GM10248 (cell line): ENCODE measurements at regions of chr1 and their contacts with region 1.

Region 1: DNA sequence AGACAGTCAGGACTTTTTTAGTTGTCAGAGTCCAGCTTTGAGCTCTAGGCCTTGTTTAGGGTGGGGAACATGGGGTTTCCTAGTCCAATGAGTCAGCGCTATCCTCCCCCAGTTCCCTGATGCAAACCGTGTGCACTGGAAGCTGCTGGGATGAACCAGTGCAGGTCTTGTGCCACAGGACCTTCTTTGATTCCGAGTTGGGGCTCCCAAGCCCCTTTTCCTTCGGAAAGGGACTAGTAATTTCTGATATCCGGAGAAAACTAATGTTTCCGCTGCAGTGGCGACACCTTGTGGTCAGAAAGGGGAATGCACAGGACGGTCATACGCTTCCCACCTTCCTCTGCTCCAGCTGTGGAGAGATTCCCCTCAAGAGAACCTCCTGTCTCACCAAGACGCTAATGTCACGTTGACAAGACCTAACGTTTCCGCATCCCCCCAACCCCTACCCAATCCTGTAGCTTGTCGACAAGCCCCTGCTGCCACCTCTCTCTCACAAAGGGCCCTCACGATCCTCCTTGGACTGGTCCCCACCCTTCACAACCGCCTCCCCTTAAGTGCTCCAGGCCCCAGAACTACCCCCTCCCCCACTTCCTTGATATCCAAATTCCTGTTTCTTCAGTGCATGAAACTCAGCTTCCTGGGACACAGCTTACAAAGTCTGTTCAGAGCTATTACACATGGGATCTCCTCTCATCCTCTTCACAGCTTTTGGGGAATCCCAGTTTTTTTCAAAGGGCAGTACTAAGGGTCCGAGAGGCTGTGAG is 30.9 kb downstream of the GPA33 start:
- DNase-seq: peak; percentile 64
- CTCF ChIP-seq: peak; percentile 91

Region 2: GRCh38 chr1:166875734-166876539 is 183.3 kb before region 1 on chr1 and contains the start of gene TADA1:
- CTCF ChIA-PET with region 1: interaction called, 51 read pairs
- POLR2A ChIA-PET with region 1: no interaction called
- DNase-seq: peak; percentile 96
- CTCF ChIP-seq: peak; percentile 13

Region 3: DNA sequence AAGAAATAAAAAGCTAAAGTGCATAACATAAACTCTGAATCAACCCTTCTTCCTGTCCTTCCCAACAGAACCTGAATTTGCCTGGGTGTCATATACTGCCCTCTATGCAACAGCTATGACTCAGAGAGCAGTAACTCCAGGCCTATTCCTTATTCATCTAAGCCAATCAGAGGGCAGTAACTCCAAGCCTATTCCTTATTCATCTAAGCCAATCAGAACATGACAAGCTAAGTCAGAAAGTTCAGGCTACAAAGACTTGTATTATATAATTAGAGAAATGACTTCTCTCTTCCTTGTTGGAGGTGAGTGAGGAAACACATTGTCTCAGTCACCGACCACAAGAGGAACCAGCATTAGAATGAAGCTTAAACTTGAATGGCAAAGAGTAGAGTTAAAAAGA is 157.0 kb before region 1 on chr1:
- CTCF ChIA-PET with region 1: interaction called, 659 read pairs
- POLR2A ChIA-PET with region 1: no interaction called
- DNase-seq: no peak
- CTCF ChIP-seq: no peak

Region 4: DNA sequence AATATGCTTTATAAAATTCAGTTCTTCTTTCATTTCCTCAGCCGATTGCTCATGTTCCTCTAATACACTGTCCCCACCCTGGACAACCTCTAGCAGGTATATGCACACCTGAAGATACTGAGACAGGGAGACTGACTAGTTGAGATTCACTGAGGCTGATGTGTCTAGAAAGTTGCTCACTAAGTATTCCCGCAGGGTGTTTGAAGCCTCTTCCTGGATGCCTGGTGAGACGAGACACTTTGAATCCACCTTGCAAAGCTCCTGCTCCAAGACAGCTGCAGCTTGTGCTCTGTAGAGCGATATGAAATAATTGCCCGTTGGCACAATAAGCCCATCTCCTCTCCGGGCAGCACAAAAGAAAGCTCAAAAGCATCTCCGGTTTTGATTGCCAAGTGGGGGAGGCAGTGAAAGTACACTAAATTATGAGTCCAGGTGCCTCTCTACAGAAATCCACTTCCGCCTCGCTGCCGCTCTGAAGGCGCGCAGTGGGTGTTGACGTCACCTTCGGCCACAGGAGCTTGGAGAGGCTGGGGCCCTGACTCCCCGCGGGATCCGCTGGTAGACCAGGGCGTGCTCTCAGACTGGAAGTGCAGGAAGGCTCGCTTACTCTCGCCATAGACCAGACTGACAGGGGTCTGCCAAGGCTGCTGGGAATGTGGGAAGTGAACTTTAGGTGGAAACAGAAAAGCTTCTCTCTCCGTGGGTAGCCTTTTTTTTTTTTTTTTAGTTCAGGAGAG is 15.3 kb before region 1 on chr1:
- CTCF ChIA-PET with region 1: interaction called, 56 read pairs
- POLR2A ChIA-PET with region 1: no interaction called
- DNase-seq: peak; percentile 72
- CTCF ChIP-seq: no peak

Region 5: GRCh38 chr1:167137332-167137781 is 78.1 kb after region 1 on chr1:
- CTCF ChIA-PET with region 1: interaction called, 11 read pairs
- POLR2A ChIA-PET with region 1: no interaction called
- DNase-seq: no peak
- CTCF ChIP-seq: no peak

Region 6: DNA sequence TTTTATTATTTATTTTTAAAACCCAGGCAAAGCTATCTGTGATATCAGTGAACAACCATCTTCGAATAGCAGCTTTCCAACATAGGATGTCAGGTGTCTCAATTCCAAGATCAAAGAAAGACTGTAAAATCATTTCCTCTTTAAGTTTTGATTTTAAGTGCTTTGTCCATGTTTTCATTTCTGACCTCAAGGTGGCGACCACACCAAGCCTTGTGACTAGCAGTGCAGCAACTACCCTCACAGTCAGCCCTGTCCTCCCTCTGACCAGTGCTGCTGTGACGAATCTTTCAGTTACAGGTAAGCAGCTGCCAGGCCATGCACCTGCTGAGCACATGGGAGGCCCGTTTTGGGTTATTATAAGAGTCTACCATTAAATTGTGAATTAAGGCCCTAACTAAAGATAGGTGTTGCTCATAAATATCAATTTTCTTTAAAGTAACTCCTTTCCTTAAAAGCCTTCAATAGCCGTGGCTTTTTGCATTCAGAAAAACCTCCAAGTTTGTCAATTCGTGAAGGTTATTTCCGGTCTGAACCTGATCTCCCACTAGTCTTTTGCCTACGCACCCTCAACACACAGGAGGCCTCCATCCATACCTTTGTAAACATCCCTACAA is 342.1 kb after region 1 on chr1:
- CTCF ChIA-PET with region 1: no interaction called
- POLR2A ChIA-PET with region 1: no interaction called
- DNase-seq: peak; percentile 46
- CTCF ChIP-seq: peak; percentile 53

Region 7: DNA sequence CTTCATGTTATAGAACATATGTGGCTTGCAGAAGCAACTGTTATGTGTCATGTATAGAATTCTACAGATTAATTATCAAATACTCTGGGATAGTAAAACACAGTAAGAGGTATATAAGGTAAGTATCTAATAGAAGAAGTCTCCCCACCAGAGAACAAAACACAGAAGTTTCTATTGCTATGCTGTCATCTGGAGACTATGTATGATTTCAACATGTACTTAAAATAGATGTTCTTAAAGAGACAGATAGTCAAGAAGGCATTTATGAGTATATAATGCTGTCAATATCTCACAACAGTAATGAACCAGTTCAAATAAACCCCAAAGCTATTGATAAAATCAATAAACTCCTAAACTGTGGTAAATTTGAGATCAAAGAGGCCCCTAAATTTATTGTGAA is 862.8 kb after region 1 on chr1:
- CTCF ChIA-PET with region 1: no interaction called
- POLR2A ChIA-PET with region 1: no interaction called
- DNase-seq: no peak
- CTCF ChIP-seq: no peak